IMR-90 (cell line): ENCODE measurements at regions of chr1 and their contacts with region 1.

Region 1: DNA sequence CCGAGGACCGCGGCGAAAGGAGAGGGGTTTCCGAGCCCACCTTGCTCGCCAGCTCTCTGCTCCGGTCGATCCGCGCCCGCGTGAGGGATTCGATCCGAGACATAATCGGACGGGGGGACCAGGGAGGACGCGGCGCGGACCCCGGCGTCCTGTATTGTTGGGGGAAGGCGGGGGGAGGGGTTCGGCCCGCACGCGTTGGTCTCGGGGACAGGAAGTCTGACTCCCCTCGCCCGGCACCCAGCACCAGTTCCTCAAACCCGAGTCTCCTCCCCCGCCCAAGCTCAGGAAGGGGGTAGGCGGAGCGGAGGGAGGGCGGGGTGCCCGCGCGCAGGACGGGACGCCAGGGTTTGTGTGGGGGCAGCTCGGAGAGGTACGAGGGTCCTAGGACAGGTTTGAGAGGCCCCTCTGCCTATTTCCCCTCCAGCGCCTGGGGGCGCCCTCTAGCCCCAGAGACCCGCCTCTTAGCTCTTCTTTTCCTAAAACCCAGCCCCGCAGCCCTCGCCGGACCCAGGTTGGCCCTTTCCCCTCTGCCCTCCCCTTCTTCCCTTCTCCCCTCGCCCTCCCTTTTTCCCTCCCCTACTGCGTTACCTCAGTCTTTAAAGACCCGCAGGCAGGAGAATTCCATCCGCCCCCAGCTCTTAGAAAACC is at the start of gene ARHGEF2:
- DNase-seq: peak; percentile 64
- ATAC-seq: peak; percentile 45
- H3K4me3 ChIP-seq: peak within 1 kb of the TSS; percentile 94
- H3K27ac ChIP-seq: peak within 1 kb of the TSS; percentile 99
- H3K4me1 ChIP-seq: peaks cover 51% of the 10 kb centered on the region
- H3K27me3 ChIP-seq: no peaks in the 10 kb centered on the region
- CTCF ChIP-seq: peak; percentile 30
- POLR2A ChIP-seq: peak; percentile 53; the same call in 1 of the 2 replicates
- RAD21 ChIP-seq: no peak; the same call in 1 of the 2 replicates
- total RNA-seq, gene ARHGEF2: 81.4 and 91.8 TPM in 2 replicates

Region 2: DNA sequence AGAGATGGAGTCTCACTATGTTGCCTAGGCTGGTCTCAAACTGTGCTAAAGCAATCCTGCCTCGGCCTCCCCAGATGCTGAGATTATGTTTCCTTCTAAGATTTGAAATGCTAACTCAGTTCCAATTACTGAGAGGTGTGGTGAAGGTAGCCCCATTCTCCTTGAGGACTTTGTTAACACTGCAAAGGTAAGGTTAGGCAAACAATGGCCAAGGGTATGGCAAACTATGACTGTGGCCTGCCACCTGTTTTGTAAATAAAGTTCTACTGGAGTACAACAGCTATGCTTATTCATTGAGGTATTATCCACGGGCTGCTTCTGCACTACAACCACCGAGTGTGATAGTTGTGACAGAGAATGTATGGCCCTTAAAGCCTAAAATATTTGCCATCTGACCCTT is 57.7 kb before region 1 on chr1:
- CTCF ChIA-PET with region 1: no interaction called
- POLR2A ChIA-PET with region 1: interaction called, 15 read pairs
- dilution Hi-C with region 1: no loop called
- in situ Hi-C with region 1: no loop called
- intact Hi-C with region 1: no loop called
- DNase-seq: no peak
- ATAC-seq: no peak
- H3K4me3 ChIP-seq: no peak overlapping the region
- H3K27ac ChIP-seq: no peak overlapping the region
- H3K4me1 ChIP-seq: peaks cover 3% of the 10 kb centered on the region; the same call in 1 of the 2 replicates
- H3K27me3 ChIP-seq: no peaks in the 10 kb centered on the region
- CTCF ChIP-seq: no peak
- POLR2A ChIP-seq: no peak
- RAD21 ChIP-seq: no peak

Region 3: DNA sequence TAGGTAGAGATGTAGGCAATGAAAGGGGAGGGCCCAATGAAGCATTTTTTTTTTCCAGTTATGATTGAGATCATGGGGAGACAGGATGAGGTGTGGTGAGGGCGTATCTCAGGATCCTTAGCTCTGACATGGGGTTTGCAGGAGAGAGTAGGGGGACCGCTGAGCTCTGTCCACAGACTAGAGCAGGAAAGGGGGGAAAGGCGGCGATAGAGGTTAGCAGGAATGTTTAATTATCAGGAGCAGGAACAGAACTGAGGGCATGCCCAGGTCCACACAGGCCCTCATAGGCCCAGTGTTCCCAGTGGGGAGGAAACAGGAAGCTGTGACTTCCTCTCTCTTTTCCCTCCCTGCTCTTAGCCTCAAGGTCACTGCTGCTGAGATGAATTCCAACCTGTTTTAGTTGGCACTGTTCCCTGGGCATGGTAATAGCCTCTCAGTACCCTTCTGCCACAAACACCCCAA is 37.9 kb before region 1 on chr1:
- CTCF ChIA-PET with region 1: interaction called, 3 read pairs
- POLR2A ChIA-PET with region 1: no interaction called
- dilution Hi-C with region 1: no loop called
- in situ Hi-C with region 1: no loop called
- intact Hi-C with region 1: loop called (anchors 5 kb)
- DNase-seq: peak; percentile 55
- ATAC-seq: peak; percentile 24
- H3K4me3 ChIP-seq: no peak overlapping the region
- H3K27ac ChIP-seq: 0 out of 2 replicates have a peak overlapping the region, but pooled peaks have one; percentile 0
- H3K4me1 ChIP-seq: peaks cover 11% of the 10 kb centered on the region
- H3K27me3 ChIP-seq: no peaks in the 10 kb centered on the region
- CTCF ChIP-seq: no peak
- POLR2A ChIP-seq: no peak
- RAD21 ChIP-seq: no peak

Region 4: GRCh38 chr1:155961937-155962336 is 16.5 kb before region 1 on chr1:
- CTCF ChIA-PET with region 1: interaction called, 4 read pairs
- POLR2A ChIA-PET with region 1: interaction called, 10 read pairs
- dilution Hi-C with region 1: no loop called
- in situ Hi-C with region 1: no loop called
- intact Hi-C with region 1: no loop called
- DNase-seq: peak; percentile 97
- ATAC-seq: peak; percentile 91
- H3K4me3 ChIP-seq: no peak overlapping the region
- H3K27ac ChIP-seq: peak overlapping the region; percentile 20
- H3K4me1 ChIP-seq: peaks cover 14% of the 10 kb centered on the region
- H3K27me3 ChIP-seq: no peaks in the 10 kb centered on the region
- CTCF ChIP-seq: peak; percentile 58
- POLR2A ChIP-seq: no peak
- RAD21 ChIP-seq: peak; percentile 70